MCF 10A (cell line): ENCODE measurements at regions of chr1 and their contacts with region 1.

Region 1: GRCh38 chr1:219058891-219059820 is 114.5 kb upstream of the LYPLAL1 start:
- DNase-seq: no peak
- H3K4me3 Mint-ChIP-seq: no peak overlapping the region
- H3K27ac Mint-ChIP-seq: no peak overlapping the region
- H3K4me1 Mint-ChIP-seq: no peaks in the 10 kb centered on the region
- H3K27me3 Mint-ChIP-seq: no peaks in the 10 kb centered on the region
- CTCF ChIP-seq: no peak

Region 2: GRCh38 chr1:218585511-218586184 is 473.5 kb before region 1 on chr1:
- CTCF ChIA-PET with region 1: no interaction called
- POLR2A ChIA-PET with region 1: no interaction called
- intact Hi-C with region 1: loop called (anchors 1 kb)
- DNase-seq: peak; percentile 95
- H3K4me3 Mint-ChIP-seq: no peak overlapping the region
- H3K27ac Mint-ChIP-seq: peak overlapping the region; percentile 81
- H3K4me1 Mint-ChIP-seq: peaks cover 26% of the 10 kb centered on the region
- H3K27me3 Mint-ChIP-seq: no peaks in the 10 kb centered on the region
- CTCF ChIP-seq: no peak

Region 3: GRCh38 chr1:218991089-218991488 is 68.1 kb before region 1 on chr1:
- CTCF ChIA-PET with region 1: no interaction called
- POLR2A ChIA-PET with region 1: no interaction called
- intact Hi-C with region 1: no loop called
- DNase-seq: no peak
- H3K4me3 Mint-ChIP-seq: no peak overlapping the region
- H3K27ac Mint-ChIP-seq: no peak overlapping the region
- H3K4me1 Mint-ChIP-seq: no peaks in the 10 kb centered on the region
- H3K27me3 Mint-ChIP-seq: no peaks in the 10 kb centered on the region
- CTCF ChIP-seq: no peak

Region 4: DNA sequence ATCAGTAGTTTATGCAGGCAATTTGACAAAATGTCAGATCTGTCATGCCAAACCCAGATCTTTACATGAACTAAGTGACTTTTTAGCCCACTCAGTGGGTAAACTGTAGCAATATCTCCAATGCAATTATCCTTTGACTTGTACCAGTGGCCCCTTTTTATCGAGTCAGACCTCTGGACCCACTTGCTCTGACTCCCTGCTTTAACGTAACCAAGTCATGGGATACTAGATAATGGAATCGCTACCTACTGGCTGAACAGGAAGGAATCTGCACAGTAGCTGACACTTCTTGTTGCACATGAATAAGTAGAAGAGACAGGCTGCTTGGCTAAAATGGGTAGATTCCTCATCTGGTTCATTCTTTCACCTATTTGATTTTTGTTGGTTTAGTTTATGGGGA is 13.9 kb before region 1 on chr1:
- CTCF ChIA-PET with region 1: no interaction called
- POLR2A ChIA-PET with region 1: no interaction called
- intact Hi-C with region 1: no loop called
- DNase-seq: no peak
- H3K4me3 Mint-ChIP-seq: no peak overlapping the region
- H3K27ac Mint-ChIP-seq: no peak overlapping the region
- H3K4me1 Mint-ChIP-seq: peaks cover 5% of the 10 kb centered on the region
- H3K27me3 Mint-ChIP-seq: no peaks in the 10 kb centered on the region
- CTCF ChIP-seq: no peak

Region 5: GRCh38 chr1:219805193-219805592 is 746.0 kb after region 1 on chr1:
- CTCF ChIA-PET with region 1: no interaction called
- POLR2A ChIA-PET with region 1: no interaction called
- intact Hi-C with region 1: loop called (anchors 5 kb)
- DNase-seq: no peak
- H3K4me3 Mint-ChIP-seq: no peak overlapping the region
- H3K27ac Mint-ChIP-seq: no peak overlapping the region
- H3K4me1 Mint-ChIP-seq: no peaks in the 10 kb centered on the region
- H3K27me3 Mint-ChIP-seq: peaks cover 38% of the 10 kb centered on the region
- CTCF ChIP-seq: peak; percentile 31